K562 (cell line): ENCODE measurements at regions of chr1 and their contacts with region 1.

Region 1: DNA sequence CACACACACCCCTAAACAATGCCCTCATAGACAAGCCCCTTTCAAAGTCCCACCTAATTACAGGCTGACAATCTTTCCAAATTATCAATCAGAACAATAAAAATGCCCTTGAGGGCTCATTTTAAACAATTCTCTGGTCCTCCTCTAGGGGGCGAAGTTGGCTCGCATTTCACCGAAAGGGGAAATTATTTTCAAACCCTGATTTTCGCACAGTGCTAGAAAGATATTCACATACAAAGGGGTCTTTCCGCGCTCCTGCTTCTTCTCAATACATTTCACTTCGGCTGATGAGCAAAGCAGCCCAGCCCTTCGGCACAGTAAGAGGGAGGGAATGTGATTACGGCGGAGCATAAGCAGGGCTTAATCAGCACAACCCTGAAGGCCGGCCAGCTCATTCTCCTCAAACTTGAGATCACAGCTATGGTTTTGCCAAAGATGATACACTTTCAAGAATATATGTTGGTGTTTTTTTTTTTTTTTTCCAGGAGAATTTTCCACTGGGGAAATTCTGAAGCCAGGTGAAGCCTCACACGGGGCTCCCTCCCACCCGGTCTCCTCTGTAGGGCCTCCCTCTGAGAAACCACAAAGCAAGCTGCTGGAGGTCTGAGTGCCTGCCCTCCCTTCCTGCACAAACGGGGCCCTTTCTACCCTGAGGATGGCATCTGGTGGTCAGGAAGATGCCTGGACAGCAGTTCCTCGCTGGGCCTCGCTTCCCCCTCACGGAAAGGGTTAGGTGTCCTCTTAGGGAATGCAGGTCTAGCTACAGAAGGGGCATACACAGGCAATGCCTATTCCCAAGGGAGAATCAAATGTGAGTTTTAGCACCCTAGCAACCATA is 66.9 kb downstream of the GNG12 start:
- DNase-seq: peak; percentile 37 to 65 (median 46)
- ATAC-seq: peak; percentile 60
- H3K4me3 ChIP-seq: no peak overlapping the region
- H3K27ac ChIP-seq: no peak overlapping the region
- H3K4me1 ChIP-seq: no peaks in the 10 kb centered on the region; a peak in 2 of 5 replicates
- H3K27me3 ChIP-seq: no peaks in the 10 kb centered on the region
- CTCF ChIP-seq: peak; percentile 63 to 87 (median 80)
- EP300 ChIP-seq: no peak
- POLR2A ChIP-seq: no peak
- RAD21 ChIP-seq: peak; percentile 80 to 81

Region 2: DNA sequence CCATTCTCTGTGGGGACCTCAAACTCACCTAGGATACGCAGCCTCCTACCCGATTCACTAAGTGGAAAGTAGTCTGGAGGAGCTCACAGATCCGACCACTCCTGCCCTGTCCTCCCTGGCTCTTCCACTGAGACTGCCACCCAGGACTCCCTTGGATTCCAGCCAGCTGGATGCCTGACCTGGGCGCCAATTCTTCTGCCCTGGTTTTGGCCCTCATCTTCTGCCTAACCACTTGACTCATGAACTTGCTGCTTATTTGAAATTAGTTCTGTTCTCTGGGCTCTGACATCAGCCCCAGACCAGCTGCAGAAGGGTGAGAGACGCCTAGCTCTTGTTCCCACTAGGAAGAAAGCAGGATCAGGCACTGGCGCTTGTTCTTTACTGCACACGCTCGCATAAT is 761.3 kb before region 1 on chr1:
- CTCF ChIA-PET with region 1: no interaction called
- POLR2A ChIA-PET with region 1: no interaction called
- in situ Hi-C with region 1: no loop called
- intact Hi-C with region 1: no loop called
- DNase-seq: no peak
- ATAC-seq: no peak
- H3K4me3 ChIP-seq: no peak overlapping the region
- H3K27ac ChIP-seq: no peak overlapping the region
- H3K4me1 ChIP-seq: peaks cover 0 to 4% of the 10 kb centered on the region in 2 experiments; a peak in 2 of 5 replicates
- H3K27me3 ChIP-seq: no peaks in the 10 kb centered on the region
- CTCF ChIP-seq: no peak
- EP300 ChIP-seq: no peak
- POLR2A ChIP-seq: no peak
- RAD21 ChIP-seq: no peak

Region 3: GRCh38 chr1:67832737-67833601 is 66.6 kb after region 1 on chr1 and contains the start of gene GNG12:
- CTCF ChIA-PET with region 1: no interaction called
- POLR2A ChIA-PET with region 1: no interaction called
- in situ Hi-C with region 1: no loop called
- intact Hi-C with region 1: loop called (anchors 5 kb)
- DNase-seq: peak; percentile 67 to 69 (median 68)
- ATAC-seq: peak; percentile 95
- H3K4me3 ChIP-seq: peak within 1 kb of the TSS; percentile 51
- H3K27ac ChIP-seq: no peak within 1 kb of the TSS
- H3K4me1 ChIP-seq: peaks cover 0 to 18% of the 10 kb centered on the region in 2 experiments; a peak in 3 of 5 replicates
- H3K27me3 ChIP-seq: peaks cover 21 to 29% of the 10 kb centered on the region in 2 experiments
- CTCF ChIP-seq: no peak
- EP300 ChIP-seq: no peak
- POLR2A ChIP-seq: no peak
- RAD21 ChIP-seq: no peak
- polyA plus RNA-seq, gene GNG12: 2.6 to 2.7 TPM

Region 4: GRCh38 chr1:68010090-68010489 is 243.7 kb after region 1 on chr1:
- CTCF ChIA-PET with region 1: no interaction called
- POLR2A ChIA-PET with region 1: interaction called, 3 read pairs
- in situ Hi-C with region 1: no loop called
- intact Hi-C with region 1: loop called (anchors 1 kb)
- DNase-seq: peak in 1 of 4 experiments; percentile 12
- ATAC-seq: peak; percentile 63; the same call in 2 of the 3 replicates
- H3K4me3 ChIP-seq: no peak overlapping the region
- H3K27ac ChIP-seq: no peak overlapping the region
- H3K4me1 ChIP-seq: no peaks in the 10 kb centered on the region; a peak in 1 of 5 replicates
- H3K27me3 ChIP-seq: no peaks in the 10 kb centered on the region
- CTCF ChIP-seq: peak in 2 of 3 experiments; percentile 12 to 64; a peak in 3 of 6 replicates
- EP300 ChIP-seq: no peak
- POLR2A ChIP-seq: no peak
- RAD21 ChIP-seq: peak; percentile 84 to 93

Region 5: DNA sequence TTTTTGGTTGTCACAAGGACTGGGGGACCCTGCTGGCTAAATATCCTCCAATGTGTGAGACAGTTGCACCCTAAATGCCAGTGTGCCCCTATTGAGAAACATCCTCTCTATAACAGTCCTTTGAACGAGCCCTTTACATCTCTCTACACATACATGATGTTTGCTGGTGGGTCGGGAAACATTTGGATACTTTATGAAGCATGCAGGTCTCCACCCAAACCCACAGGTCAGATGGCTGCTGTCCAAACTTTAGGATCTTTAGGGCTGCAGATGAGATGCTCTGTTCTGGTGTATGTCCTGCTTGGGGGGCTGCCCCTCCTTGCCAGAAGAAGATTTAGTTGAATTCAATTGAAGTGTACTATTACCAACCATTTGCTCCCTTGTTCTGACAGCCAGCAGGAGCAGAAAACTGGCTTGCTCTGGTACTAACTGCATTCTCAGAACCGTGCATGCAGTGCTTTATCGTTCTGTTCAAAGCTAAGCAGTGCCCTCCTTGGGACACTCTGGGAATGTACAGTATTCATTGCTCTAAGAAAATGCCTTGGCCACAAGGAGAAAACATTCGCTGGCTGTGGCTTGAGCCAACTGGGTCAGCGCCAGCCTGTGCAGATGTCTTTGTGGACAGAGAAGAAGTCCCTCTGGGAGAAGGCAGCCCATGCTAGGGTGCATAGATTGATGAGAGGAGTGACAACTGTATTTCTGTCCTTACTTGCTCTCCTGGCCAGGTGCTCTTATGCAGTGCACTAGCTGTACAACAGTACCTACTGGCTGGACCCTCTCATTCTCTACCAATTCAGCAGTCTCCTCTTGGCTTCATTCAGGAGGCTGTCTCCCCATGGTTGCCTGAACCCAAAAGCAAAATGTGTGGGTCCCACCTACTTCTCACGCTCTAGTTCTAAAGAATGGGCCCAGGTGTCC is 345.4 kb after region 1 on chr1:
- CTCF ChIA-PET with region 1: interaction called, 4 read pairs
- POLR2A ChIA-PET with region 1: no interaction called
- in situ Hi-C with region 1: no loop called
- intact Hi-C with region 1: loop called (anchors 5 kb)
- DNase-seq: peak in 2 of 4 experiments; percentile 42 to 51
- ATAC-seq: peak; percentile 93
- H3K4me3 ChIP-seq: no peak overlapping the region
- H3K27ac ChIP-seq: no peak overlapping the region
- H3K4me1 ChIP-seq: no peaks in the 10 kb centered on the region
- H3K27me3 ChIP-seq: no peaks in the 10 kb centered on the region; a peak in 1 of 5 replicates
- CTCF ChIP-seq: peak; percentile 71 to 84 (median 74)
- EP300 ChIP-seq: no peak
- POLR2A ChIP-seq: no peak
- RAD21 ChIP-seq: peak; percentile 97